OCI-LY7 (cell line): ENCODE measurements at regions of chr1 and their contacts with region 1.

Region 1: DNA sequence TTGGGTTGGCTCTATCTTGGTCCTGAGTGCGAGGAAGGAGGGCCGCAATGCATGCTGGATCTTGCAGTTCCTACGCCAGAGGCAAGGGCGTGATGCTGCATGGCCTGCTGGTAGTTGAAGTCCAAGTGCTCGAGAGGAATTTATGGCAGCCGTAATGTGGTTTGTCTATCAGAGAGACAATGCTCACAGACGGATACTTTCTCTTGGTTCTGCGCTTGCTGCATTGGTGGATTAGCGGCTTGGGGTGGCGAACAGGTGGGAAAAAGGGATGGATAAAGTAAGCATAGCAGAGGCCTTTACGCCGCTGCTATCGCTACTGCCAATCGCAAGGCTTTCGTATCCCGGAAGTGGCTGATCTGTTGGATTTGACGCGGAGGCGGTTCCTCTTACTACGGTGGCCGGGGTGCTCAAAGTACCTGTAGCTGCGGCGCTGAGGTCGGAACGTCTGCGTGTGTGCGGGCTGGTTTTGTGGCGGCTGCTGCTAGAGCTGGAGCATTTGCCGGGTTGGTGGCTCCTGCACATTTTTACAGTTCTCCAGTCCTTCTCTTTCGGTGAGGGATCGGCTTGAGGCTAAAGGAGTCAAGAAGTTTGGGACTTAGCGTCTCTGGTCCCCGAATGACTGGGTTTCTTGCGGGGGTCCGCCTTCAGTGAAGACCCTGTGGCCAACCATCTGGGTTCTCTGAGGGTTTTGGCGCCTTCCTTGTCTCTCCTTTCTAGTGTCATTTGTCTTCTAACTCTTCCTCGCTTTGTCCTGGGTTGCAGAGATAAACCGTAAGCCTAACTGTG is at the start of gene ATG4C:
- DNase-seq: peak; percentile 97
- H3K4me3 ChIP-seq: peak within 1 kb of the TSS; percentile 89
- H3K27ac ChIP-seq: peak within 1 kb of the TSS; percentile 68
- H3K4me1 ChIP-seq: peaks cover 12% of the 10 kb centered on the region
- CTCF ChIP-seq: no peak
- total RNA-seq, gene ATG4C: 7.3 and 16.0 TPM in 2 replicates

Region 2: DNA sequence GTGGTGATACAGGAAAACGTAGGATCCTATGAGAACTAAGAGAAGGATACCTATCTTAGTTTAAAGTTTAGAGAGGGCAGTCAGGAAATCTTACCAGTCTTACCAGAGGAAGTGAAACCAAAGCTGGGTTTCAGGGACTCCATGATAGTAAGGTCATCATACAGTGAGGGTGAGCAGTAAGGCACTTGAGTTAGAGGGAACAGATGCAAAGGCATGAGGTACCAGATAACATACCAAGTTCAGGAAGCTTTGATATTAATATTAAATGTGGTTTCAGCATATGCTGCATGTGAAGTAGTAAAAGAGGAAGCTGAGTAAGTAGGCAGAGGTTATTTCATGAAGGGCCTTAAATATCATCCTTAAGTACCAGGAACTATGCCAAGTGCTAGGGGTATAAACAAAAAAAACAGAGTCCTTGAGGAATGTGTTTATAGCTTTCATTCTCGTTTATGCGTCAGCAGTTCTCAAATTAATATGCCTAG is 16.9 kb after region 1 on chr1:
- CTCF ChIA-PET with region 1: no interaction called
- POLR2A ChIA-PET with region 1: interaction called, 6 read pairs
- intact Hi-C with region 1: loop called (anchors 2 kb)
- DNase-seq: peak; percentile 90
- H3K4me3 ChIP-seq: peak overlapping the region; percentile 50
- H3K27ac ChIP-seq: peak overlapping the region; percentile 79
- H3K4me1 ChIP-seq: peaks cover 24% of the 10 kb centered on the region
- CTCF ChIP-seq: no peak